Mucosa of descending colon (tissue), 3 donors: ENCODE measurements at regions of chr22 and their contacts with region 1.

Region 1: GRCh38 chr22:33920927-33921524 is 750 bp upstream of the LARGE1 start:
- DNase-seq: peak; percentile 98 to 100 (median 99)
- ATAC-seq: peak; percentile 94
- H3K4me3 ChIP-seq: peak overlapping the region; percentile 75
- H3K4me1 ChIP-seq: no peaks in the 10 kb centered on the region
- CTCF ChIP-seq: no peak

Region 2: DNA sequence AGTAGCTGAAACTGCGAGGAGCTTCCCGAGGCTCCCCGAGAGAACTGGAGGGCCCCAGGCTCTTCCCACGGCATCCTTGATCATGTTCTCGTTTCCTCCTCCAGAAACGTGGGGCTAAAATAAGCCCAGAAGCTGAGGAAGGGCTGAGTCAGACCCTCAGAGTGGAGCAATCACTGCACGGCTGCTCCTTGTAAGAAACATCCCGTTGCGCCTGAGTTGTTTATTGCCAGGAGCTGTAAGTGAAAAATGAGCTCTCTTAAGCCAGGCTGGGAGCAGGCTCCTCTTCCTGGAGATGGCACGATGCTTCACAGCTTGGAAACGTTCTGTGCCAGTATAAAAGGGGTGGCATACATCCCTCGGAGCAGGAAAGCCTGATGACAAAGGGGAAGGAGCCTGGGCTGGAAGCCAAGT is 815.5 kb before region 1 on chr22:
- intact Hi-C with region 1: no loop called
- DNase-seq: no peak
- ATAC-seq: no peak
- H3K4me3 ChIP-seq: no peak overlapping the region
- H3K4me1 ChIP-seq: no peaks in the 10 kb centered on the region
- CTCF ChIP-seq: no peak

Region 3: GRCh38 chr22:34105461-34106062 is 184.5 kb after region 1 on chr22:
- intact Hi-C with region 1: loop called (anchors 10 kb)
- DNase-seq: peak in 2 of 3 donors; percentile 71 to 78
- ATAC-seq: peak; percentile 79
- H3K4me3 ChIP-seq: no peak overlapping the region
- H3K4me1 ChIP-seq: no peaks in the 10 kb centered on the region
- CTCF ChIP-seq: peak; percentile 26